Gastrocnemius medialis (tissue), 4 donors: ENCODE measurements at regions of chr19 and their contacts with region 1.

Region 1: DNA sequence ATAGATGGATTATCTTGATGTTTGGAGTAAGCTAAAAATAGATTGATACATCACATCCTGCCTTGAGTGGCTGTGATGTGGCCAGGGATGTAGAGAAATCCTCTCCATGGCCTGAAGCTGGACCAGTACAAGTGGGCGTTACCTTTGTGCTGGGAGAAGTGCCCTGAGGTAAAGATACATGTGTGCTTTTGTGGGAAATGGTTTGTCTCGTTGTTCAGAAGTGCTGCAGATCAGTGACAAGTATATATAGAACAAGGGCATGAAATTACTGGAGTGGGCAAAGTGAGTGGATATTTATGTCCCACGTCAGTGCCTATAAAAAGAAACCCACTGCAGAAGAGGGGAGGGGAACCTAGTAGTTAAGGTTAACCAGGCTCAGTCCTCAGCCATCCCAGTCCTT is 12.2 kb upstream of the ZNF304 start:
- DNase-seq: peak in 1 of 2 donors; percentile 37
- ATAC-seq: peak; percentile 87 to 97
- H3K4me3 ChIP-seq: peak overlapping the region in 1 of 4 donors; percentile 17
- H3K27ac ChIP-seq: peak overlapping the region; percentile 72 to 79 (median 76)
- H3K4me1 ChIP-seq: peaks cover 8 to 23% of the 10 kb centered on the region in 2 donors
- H3K27me3 ChIP-seq: no peaks in the 10 kb centered on the region
- CTCF ChIP-seq: no peak
- POLR2A ChIP-seq: no peak

Region 2: GRCh38 chr19:57302020-57302465 is 36.8 kb before region 1 on chr19:
- in situ Hi-C with region 1: no loop called
- intact Hi-C with region 1: loop called (anchors 2 kb)
- DNase-seq: peak; percentile 81 to 91
- ATAC-seq: peak; percentile 99 to 100
- H3K4me3 ChIP-seq: no peak overlapping the region
- H3K27ac ChIP-seq: peak overlapping the region; percentile 77 to 83 (median 80)
- H3K4me1 ChIP-seq: peaks cover 23 to 30% of the 10 kb centered on the region in 2 donors
- H3K27me3 ChIP-seq: no peaks in the 10 kb centered on the region
- CTCF ChIP-seq: no peak
- POLR2A ChIP-seq: no peak